HEK293T (cell line): ENCODE measurements at regions of chr2 and their contacts with region 1.

Region 1: DNA sequence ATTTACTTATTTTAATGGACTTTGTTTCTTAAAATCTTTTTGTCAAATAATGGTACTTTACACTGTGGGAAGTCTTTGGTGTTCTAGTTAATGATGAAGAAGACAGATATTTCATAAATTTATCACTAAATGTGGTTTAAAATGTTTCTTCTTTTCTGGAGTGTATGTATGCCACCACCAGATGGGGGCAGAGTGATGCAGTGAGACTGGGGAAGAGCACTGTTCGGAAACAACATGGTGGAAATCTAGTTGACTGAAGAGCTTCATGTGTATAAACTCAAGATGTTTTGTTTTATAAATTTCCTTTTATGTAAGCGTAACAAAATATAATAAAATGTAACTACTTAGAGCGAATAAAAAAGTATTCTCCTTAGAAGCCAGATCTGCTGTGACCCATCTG is 195.1 kb downstream of the KCNE4 start:
- DNase-seq: no peak

Region 2: GRCh38 chr2:223563462-223563861 is 316.3 kb after region 1 on chr2:
- CTCF ChIA-PET with region 1: interaction called, 11 read pairs
- POLR2A ChIA-PET with region 1: no interaction called
- DNase-seq: peak; percentile 18